ENCODE measurements at regions of chr15 and their contacts with region 1.

Region 1: DNA sequence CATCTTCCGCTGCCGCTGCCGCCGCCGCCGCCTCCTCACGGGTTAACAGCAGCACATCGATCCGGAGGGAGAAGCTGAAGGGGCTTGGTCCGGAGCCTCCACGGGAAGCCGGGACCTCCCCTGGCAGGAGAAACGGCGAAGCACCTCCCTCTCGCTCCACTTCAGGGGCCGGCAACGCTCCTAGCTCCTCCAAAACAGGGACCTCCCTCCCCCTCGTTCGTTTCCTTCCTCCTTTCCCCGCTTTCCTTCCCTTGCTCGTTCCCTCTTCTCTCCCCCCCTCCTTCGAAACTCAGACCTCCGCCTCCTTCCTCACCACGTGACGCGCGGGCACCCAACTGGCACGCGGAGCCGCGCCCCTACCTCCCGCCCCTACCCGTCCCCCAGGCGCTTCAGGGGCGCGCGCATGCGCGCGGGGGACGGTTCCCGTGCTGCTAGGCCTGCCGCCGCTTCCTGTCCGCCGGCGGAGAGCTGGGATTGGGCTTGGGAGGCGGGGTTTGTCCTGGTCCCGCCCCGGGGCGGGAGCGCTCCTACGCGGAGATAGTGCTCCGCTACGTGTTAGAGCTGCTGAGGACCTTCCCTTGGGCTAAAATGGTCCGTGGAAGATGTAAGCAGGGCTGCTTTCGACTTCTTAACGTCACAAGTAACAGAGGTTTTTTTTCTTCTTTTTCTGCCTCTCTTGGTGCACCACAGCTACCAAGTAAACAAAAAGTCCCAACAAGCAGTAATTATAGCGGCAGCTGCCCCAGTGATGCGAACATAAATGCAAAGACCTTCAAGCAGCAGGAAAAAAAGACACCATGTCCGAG is at the start of gene ADAM10:
- DNase-seq: peak; percentile 90 to 98
- ATAC-seq: peak; percentile 88 to 97 (median 92)
- H3K4me3 ChIP-seq: peak within 1 kb of the TSS; percentile 100
- H3K4me3 Mint-ChIP-seq: peak within 1 kb of the TSS; percentile 98
- H3K27ac ChIP-seq: peak within 1 kb of the TSS; percentile 97
- H3K27ac Mint-ChIP-seq: peak within 1 kb of the TSS; percentile 94 to 97
- H3K4me1 ChIP-seq: peaks cover 13% of the 10 kb centered on the region
- H3K4me1 Mint-ChIP-seq: peaks cover 43 to 45% of the 10 kb centered on the region in 2 donors
- H3K27me3 ChIP-seq: no peaks in the 10 kb centered on the region
- H3K27me3 Mint-ChIP-seq: no peaks in the 10 kb centered on the region
- CTCF ChIP-seq: no peak
- total RNA-seq, gene ADAM10: 223 to 297 (median 259) TPM

Region 2: GRCh38 chr15:58475573-58476524 is 273.9 kb before region 1 on chr15:
- intact Hi-C with region 1: loop called (anchors 10 kb)
- DNase-seq: peak in 1 of 2 donors; percentile 18
- ATAC-seq: peak in 1 of 3 donors; percentile 28
- H3K4me3 ChIP-seq: no peak overlapping the region
- H3K4me3 Mint-ChIP-seq: peak overlapping the region; percentile 78
- H3K27ac ChIP-seq: no peak overlapping the region
- H3K27ac Mint-ChIP-seq: peak overlapping the region; percentile 88 to 91
- H3K4me1 ChIP-seq: peaks cover 68% of the 10 kb centered on the region
- H3K4me1 Mint-ChIP-seq: peaks cover 61 to 74% of the 10 kb centered on the region in 2 donors
- H3K27me3 ChIP-seq: no peaks in the 10 kb centered on the region
- H3K27me3 Mint-ChIP-seq: no peaks in the 10 kb centered on the region
- CTCF ChIP-seq: no peak

Region 3: DNA sequence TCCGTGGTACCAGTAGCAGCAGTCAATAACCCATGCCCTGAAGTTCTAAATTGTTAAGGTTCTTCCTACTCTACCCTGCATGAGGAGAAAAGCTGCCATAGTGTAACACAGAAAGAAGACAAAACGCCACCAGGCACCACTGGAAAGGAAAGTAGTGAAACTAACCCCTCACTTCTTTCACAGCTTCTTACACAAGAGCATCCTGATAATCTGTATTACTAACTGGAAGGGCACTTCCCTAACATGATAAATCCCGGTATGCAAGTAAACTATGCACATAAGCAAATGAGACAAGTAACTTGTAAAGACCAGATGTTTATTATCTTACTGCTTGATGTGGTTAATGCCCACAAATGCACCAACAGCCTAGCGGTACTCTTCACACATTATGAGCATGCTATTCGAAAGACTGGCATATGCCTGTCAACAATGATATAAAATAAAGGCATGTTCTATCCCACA is 141.6 kb before region 1 on chr15:
- intact Hi-C with region 1: loop called (anchors 2 kb)
- DNase-seq: peak in 1 of 2 donors; percentile 60
- ATAC-seq: peak; percentile 73 to 83 (median 77)
- H3K4me3 ChIP-seq: no peak overlapping the region
- H3K4me3 Mint-ChIP-seq: peak overlapping the region; percentile 82
- H3K27ac ChIP-seq: peak overlapping the region; percentile 45
- H3K27ac Mint-ChIP-seq: peak overlapping the region; percentile 89 to 90
- H3K4me1 ChIP-seq: peaks cover 13% of the 10 kb centered on the region
- H3K4me1 Mint-ChIP-seq: peaks cover 60 to 63% of the 10 kb centered on the region in 2 donors
- H3K27me3 ChIP-seq: no peaks in the 10 kb centered on the region
- H3K27me3 Mint-ChIP-seq: no peaks in the 10 kb centered on the region
- CTCF ChIP-seq: no peak

Region 4: GRCh38 chr15:58690703-58691102 is 59.0 kb before region 1 on chr15:
- intact Hi-C with region 1: loop called (anchors 2 kb)
- DNase-seq: peak in 1 of 2 donors; percentile 10
- ATAC-seq: peak in 2 of 3 donors; percentile 24 to 43
- H3K4me3 ChIP-seq: no peak overlapping the region
- H3K4me3 Mint-ChIP-seq: no peak overlapping the region
- H3K27ac ChIP-seq: no peak overlapping the region
- H3K27ac Mint-ChIP-seq: peak overlapping the region; percentile 75
- H3K4me1 ChIP-seq: peaks cover 9% of the 10 kb centered on the region
- H3K4me1 Mint-ChIP-seq: peaks cover 65 to 72% of the 10 kb centered on the region in 2 donors
- H3K27me3 ChIP-seq: no peaks in the 10 kb centered on the region
- H3K27me3 Mint-ChIP-seq: no peaks in the 10 kb centered on the region
- CTCF ChIP-seq: no peak

Region 5: GRCh38 chr15:58704155-58704865 is 45.4 kb before region 1 on chr15:
- intact Hi-C with region 1: no loop called
- DNase-seq: no peak
- ATAC-seq: no peak
- H3K4me3 ChIP-seq: no peak overlapping the region
- H3K4me3 Mint-ChIP-seq: no peak overlapping the region
- H3K27ac ChIP-seq: no peak overlapping the region
- H3K27ac Mint-ChIP-seq: peak overlapping the region; percentile 46 to 69
- H3K4me1 ChIP-seq: peaks cover 3% of the 10 kb centered on the region
- H3K4me1 Mint-ChIP-seq: peaks cover 53 to 78% of the 10 kb centered on the region in 2 donors
- H3K27me3 ChIP-seq: no peaks in the 10 kb centered on the region
- H3K27me3 Mint-ChIP-seq: no peaks in the 10 kb centered on the region
- CTCF ChIP-seq: no peak

Region 6: GRCh38 chr15:58770857-58771620 is 21.3 kb after region 1 on chr15 and contains the start of gene MINDY2:
- intact Hi-C with region 1: loop called (anchors 2 kb)
- DNase-seq: peak; percentile 89 to 97
- ATAC-seq: peak; percentile 92 to 99 (median 94)
- H3K4me3 ChIP-seq: peak within 1 kb of the TSS; percentile 99
- H3K4me3 Mint-ChIP-seq: no peak within 1 kb of the TSS
- H3K27ac ChIP-seq: peak within 1 kb of the TSS; percentile 92
- H3K27ac Mint-ChIP-seq: peak within 1 kb of the TSS; percentile 87 to 96
- H3K4me1 ChIP-seq: peaks cover 16% of the 10 kb centered on the region
- H3K4me1 Mint-ChIP-seq: peaks cover 10 to 14% of the 10 kb centered on the region in 2 donors
- H3K27me3 ChIP-seq: no peaks in the 10 kb centered on the region
- H3K27me3 Mint-ChIP-seq: no peaks in the 10 kb centered on the region
- CTCF ChIP-seq: no peak
- total RNA-seq, gene MINDY2: 16.3 to 18.7 (median 18.3) TPM

Region 7: DNA sequence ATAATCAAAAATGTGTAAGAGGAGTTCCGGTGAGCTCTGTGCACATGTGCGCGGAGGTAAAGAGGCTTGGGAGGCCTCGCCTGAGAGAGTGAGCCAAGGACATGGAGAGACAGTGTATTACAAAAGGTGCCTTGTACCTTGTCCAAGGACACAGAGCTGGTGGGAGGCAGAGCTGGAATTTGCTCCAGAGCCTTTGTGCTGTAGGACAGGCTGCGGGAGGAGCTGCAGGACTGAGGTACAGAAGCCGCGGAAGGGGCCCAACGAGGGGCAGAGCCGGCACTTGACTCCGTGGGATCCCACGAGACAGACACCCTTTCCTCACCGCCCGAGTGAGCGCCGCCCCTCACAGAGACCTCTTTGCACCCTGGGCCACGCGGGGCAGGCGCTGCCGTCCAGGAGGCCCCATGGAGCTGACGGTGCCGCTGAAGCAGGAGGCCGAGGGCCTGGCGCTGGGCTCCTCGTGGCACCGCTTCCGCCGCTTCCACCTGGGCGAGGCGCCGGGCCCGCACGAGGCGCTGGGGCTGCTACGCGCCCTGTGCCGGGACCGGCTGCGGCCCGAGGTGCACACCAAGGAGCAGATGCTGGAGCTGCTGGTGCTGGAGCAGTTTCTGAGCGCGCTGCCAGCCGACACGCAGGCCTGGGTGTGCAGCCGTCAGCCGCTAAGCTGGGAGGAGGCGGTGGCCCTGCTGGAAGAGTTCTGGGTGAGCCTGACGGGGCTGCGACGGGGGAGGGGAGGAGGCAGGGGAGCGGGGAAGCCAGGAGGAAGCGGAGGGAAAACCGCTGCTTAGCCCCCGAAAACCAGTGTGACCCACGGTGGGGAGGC is 115.1 kb after region 1 on chr15:
- intact Hi-C with region 1: no loop called
- DNase-seq: peak in 1 of 2 donors; percentile 20
- ATAC-seq: peak; percentile 39 to 72 (median 54)
- H3K4me3 ChIP-seq: no peak overlapping the region
- H3K4me3 Mint-ChIP-seq: peak overlapping the region; percentile 55
- H3K27ac ChIP-seq: no peak overlapping the region
- H3K27ac Mint-ChIP-seq: no peak overlapping the region
- H3K4me1 ChIP-seq: peaks cover 11% of the 10 kb centered on the region
- H3K4me1 Mint-ChIP-seq: peaks cover 7 to 9% of the 10 kb centered on the region in 2 donors
- H3K27me3 ChIP-seq: peaks cover 2% of the 10 kb centered on the region
- H3K27me3 Mint-ChIP-seq: peaks cover 6 to 8% of the 10 kb centered on the region in 2 donors
- CTCF ChIP-seq: no peak